PC-9 (cell line): ENCODE measurements at regions of chr13 and their contacts with region 1.

Region 1: DNA sequence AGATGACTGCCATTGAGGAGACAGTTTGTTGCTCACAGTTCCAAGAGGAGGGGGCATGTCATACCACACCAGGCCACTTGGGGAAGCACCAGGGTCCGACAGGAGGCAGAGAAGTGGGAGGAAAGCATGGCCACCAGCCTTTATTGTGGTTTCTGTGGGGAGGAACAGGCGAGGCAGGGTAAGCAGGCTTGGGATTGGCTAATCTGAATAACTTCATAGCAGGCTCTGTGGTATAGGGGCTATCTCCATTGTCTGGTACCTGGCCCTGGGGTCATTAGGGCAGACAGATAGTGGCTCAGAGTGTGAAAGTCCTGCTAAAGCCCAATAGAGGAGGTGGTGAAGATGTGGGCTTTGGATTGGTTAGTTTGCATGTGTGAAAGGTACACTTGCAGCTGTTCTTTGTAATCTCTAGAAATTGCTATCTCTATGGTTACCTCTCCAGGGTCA is 35.5 kb downstream of the CBY2 start:
- DNase-seq: no peak
- H3K4me3 ChIP-seq: no peak overlapping the region
- H3K27ac ChIP-seq: no peak overlapping the region
- H3K4me1 ChIP-seq: no peaks in the 10 kb centered on the region
- H3K27me3 ChIP-seq: peaks cover 59% of the 10 kb centered on the region
- CTCF ChIP-seq: peak; percentile 32; the same call in 1 of the 2 replicates

Region 2: GRCh38 chr13:45695198-45695730 is 42.3 kb before region 1 on chr13:
- CTCF ChIA-PET with region 1: no interaction called
- POLR2A ChIA-PET with region 1: interaction called, 11 read pairs
- intact Hi-C with region 1: no loop called
- DNase-seq: no peak
- H3K4me3 ChIP-seq: no peak overlapping the region
- H3K27ac ChIP-seq: no peak overlapping the region
- H3K4me1 ChIP-seq: no peaks in the 10 kb centered on the region
- H3K27me3 ChIP-seq: peaks cover 71% of the 10 kb centered on the region
- CTCF ChIP-seq: no peak

Region 3: DNA sequence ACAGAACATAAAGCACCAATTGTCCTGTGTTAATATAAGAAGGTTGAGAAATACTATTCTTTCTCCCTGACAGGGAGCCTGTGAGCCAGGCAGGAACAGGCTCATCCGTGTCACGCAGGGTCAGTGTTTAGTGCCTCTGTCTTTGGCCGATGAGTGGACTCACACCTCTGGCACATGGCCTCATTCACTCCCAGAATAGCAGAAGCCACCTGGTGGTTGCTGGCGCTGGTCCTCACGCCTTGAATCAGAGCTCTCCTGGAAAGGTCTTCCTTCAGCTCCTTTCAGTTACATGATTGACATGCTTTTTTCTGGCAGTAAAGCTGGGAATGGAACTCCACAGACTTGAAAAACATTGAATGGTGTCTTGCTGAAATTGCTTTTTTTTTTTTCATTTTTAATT is 142.1 kb after region 1 on chr13:
- CTCF ChIA-PET with region 1: no interaction called
- POLR2A ChIA-PET with region 1: no interaction called
- intact Hi-C with region 1: no loop called
- DNase-seq: no peak
- H3K4me3 ChIP-seq: no peak overlapping the region
- H3K27ac ChIP-seq: no peak overlapping the region
- H3K4me1 ChIP-seq: no peaks in the 10 kb centered on the region
- H3K27me3 ChIP-seq: peaks cover under 1% of the 10 kb centered on the region
- CTCF ChIP-seq: no peak; the same call in 1 of the 2 replicates